ENCODE measurements at regions of chr4 and their contacts with region 1.

Region 1: GRCh38 chr4:5812506-5813229 is 80.2 kb downstream of the CRMP1 start:
- DNase-seq: peak; percentile 62
- ATAC-seq: peak; percentile 95
- H3K4me3 ChIP-seq: no peak overlapping the region
- H3K27ac ChIP-seq: no peak overlapping the region
- H3K4me1 ChIP-seq: no peaks in the 10 kb centered on the region
- H3K27me3 ChIP-seq: no peaks in the 10 kb centered on the region
- CTCF ChIP-seq: peak; percentile 74 to 81 (median 78)
- POLR2A ChIP-seq: no peak
- RAD21 ChIP-seq: peak; percentile 87

Region 2: DNA sequence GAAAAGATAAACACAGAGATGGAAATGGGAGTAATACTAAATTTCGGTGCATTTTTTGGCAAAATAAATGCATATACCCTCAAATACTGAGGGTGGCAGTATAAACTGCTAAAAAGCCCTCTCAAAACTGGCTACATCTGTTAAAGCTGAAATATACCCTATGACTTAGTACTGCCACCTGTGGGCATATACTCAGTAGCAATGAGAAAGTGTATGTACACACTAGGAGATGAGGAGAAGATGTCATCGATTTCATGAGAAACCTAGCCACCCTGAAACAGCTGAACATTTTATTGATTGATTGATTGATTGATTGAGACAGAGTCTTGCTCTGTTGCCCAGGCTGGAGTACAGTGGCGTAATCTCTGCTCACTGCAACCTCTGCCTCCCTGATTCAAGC is 1552.4 kb before region 1 on chr4:
- CTCF ChIA-PET with region 1: no interaction called
- POLR2A ChIA-PET with region 1: no interaction called
- RAD21 ChIA-PET with region 1: no interaction called
- intact Hi-C with region 1: loop called (anchors 10 kb)
- DNase-seq: peak; percentile 74
- ATAC-seq: peak; percentile 98
- H3K4me3 ChIP-seq: no peak overlapping the region
- H3K27ac ChIP-seq: no peak overlapping the region
- H3K4me1 ChIP-seq: no peaks in the 10 kb centered on the region
- H3K27me3 ChIP-seq: no peaks in the 10 kb centered on the region
- CTCF ChIP-seq: peak; percentile 52 to 96 (median 74)
- POLR2A ChIP-seq: no peak
- RAD21 ChIP-seq: peak; percentile 80

Region 3: GRCh38 chr4:4488405-4489404 is 1324.0 kb before region 1 on chr4:
- CTCF ChIA-PET with region 1: no interaction called
- POLR2A ChIA-PET with region 1: no interaction called
- RAD21 ChIA-PET with region 1: no interaction called
- intact Hi-C with region 1: loop called (anchors 5 kb)
- DNase-seq: peak; percentile 60
- ATAC-seq: peak; percentile 99
- H3K4me3 ChIP-seq: no peak overlapping the region
- H3K27ac ChIP-seq: no peak overlapping the region
- H3K4me1 ChIP-seq: no peaks in the 10 kb centered on the region
- H3K27me3 ChIP-seq: no peaks in the 10 kb centered on the region
- CTCF ChIP-seq: peak; percentile 60 to 94 (median 93); a peak in 5 of 6 replicates
- POLR2A ChIP-seq: no peak
- RAD21 ChIP-seq: peak; percentile 86

Region 4: GRCh38 chr4:4762909-4763821 is 1049.5 kb before region 1 on chr4:
- CTCF ChIA-PET with region 1: no interaction called
- POLR2A ChIA-PET with region 1: no interaction called
- RAD21 ChIA-PET with region 1: no interaction called
- intact Hi-C with region 1: no loop called
- DNase-seq: peak; percentile 98
- ATAC-seq: peak; percentile 80
- H3K4me3 ChIP-seq: peak overlapping the region; percentile 21 to 45
- H3K27ac ChIP-seq: peak overlapping the region; percentile 89
- H3K4me1 ChIP-seq: peaks cover 62 to 82% of the 10 kb centered on the region in 2 experiments
- H3K27me3 ChIP-seq: no peaks in the 10 kb centered on the region
- CTCF ChIP-seq: no peak
- POLR2A ChIP-seq: no peak
- RAD21 ChIP-seq: no peak

Region 5: GRCh38 chr4:5399790-5400421 is 412.8 kb before region 1 on chr4:
- CTCF ChIA-PET with region 1: interaction called, 13 read pairs
- POLR2A ChIA-PET with region 1: no interaction called
- RAD21 ChIA-PET with region 1: no interaction called
- intact Hi-C with region 1: loop called (anchors 1 kb)
- DNase-seq: peak; percentile 8
- ATAC-seq: peak; percentile 77
- H3K4me3 ChIP-seq: no peak overlapping the region
- H3K27ac ChIP-seq: no peak overlapping the region
- H3K4me1 ChIP-seq: no peaks in the 10 kb centered on the region
- H3K27me3 ChIP-seq: peaks cover 25% of the 10 kb centered on the region
- CTCF ChIP-seq: peak; percentile 47 to 85 (median 75); a peak in 5 of 6 replicates
- POLR2A ChIP-seq: no peak
- RAD21 ChIP-seq: peak; percentile 48

Region 6: GRCh38 chr4:5824635-5825034 is 12.0 kb after region 1 on chr4:
- CTCF ChIA-PET with region 1: interaction called, 26 read pairs
- POLR2A ChIA-PET with region 1: no interaction called
- RAD21 ChIA-PET with region 1: no interaction called
- intact Hi-C with region 1: no loop called
- DNase-seq: peak; percentile 23
- ATAC-seq: peak; percentile 50
- H3K4me3 ChIP-seq: no peak overlapping the region
- H3K27ac ChIP-seq: no peak overlapping the region
- H3K4me1 ChIP-seq: peaks cover 0 to 7% of the 10 kb centered on the region in 2 experiments; a peak in 1 of 4 replicates
- H3K27me3 ChIP-seq: peaks cover 17% of the 10 kb centered on the region
- CTCF ChIP-seq: peak; percentile 33 to 68 (median 67); a peak in 5 of 6 replicates
- POLR2A ChIP-seq: no peak
- RAD21 ChIP-seq: peak; percentile 51

Measured in HCT116 (cell line).